ENCODE measurements at regions of chr10 and their contacts with region 1.

Region 1: GRCh38 chr10:16777473-16778370 is 39.5 kb downstream of the RSU1 start:
- DNase-seq: peak; percentile 19
- ATAC-seq: no peak
- H3K4me3 ChIP-seq: no peak overlapping the region
- H3K27ac ChIP-seq: no peak overlapping the region
- H3K4me1 ChIP-seq: no peaks in the 10 kb centered on the region
- H3K27me3 ChIP-seq: no peaks in the 10 kb centered on the region
- CTCF ChIP-seq: peak; percentile 41 to 81 (median 58); a peak in 5 of 6 replicates
- POLR2A ChIP-seq: no peak
- RAD21 ChIP-seq: peak; percentile 69

Region 2: DNA sequence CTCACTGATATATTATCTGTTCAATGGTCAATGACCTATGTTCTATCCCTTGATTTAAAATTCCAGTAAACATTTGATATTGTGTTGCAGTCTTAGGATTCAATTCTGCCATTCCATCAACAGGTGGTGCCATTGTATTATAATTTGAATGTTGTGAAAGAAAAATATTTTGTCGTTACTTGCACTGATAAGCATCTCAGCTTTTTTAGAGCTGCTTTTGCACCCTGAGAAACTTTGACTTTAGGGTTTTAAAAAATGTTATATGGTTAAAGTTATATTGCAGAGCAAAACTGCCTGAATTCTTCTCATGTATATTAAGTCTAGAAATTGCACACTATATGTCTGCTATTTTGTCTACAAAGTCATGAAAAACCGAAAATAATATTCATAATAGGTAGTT is 898.7 kb before region 1 on chr10:
- CTCF ChIA-PET with region 1: interaction called, 3 read pairs
- POLR2A ChIA-PET with region 1: no interaction called
- RAD21 ChIA-PET with region 1: no interaction called
- intact Hi-C with region 1: loop called (anchors 2 kb)
- DNase-seq: no peak
- ATAC-seq: peak; percentile 53
- H3K4me3 ChIP-seq: no peak overlapping the region
- H3K27ac ChIP-seq: no peak overlapping the region
- H3K4me1 ChIP-seq: no peaks in the 10 kb centered on the region
- H3K27me3 ChIP-seq: peaks cover 33% of the 10 kb centered on the region
- CTCF ChIP-seq: peak; percentile 48 to 82 (median 59); a peak in 5 of 6 replicates
- POLR2A ChIP-seq: no peak
- RAD21 ChIP-seq: peak; percentile 69

Region 3: DNA sequence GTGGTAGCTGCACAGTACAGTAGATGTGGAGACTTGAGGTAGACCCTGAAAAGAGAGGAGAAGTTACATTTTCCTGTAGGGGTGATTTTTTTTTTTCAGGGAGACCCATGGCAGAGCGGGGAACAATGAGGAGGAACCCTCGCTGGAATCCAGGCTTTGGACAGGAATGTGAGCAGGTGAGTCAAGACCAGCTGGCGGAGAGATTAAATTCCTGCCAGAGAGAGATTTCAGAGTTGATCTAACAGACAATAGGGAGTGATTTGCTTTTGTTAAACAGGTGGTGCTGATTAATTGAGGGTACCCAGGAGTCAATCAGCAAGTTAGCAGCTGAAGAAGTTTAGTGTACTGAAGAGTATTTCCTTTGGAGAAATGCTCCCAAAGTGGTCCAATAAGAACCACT is 875.8 kb before region 1 on chr10:
- CTCF ChIA-PET with region 1: interaction called, 10 read pairs
- POLR2A ChIA-PET with region 1: no interaction called
- RAD21 ChIA-PET with region 1: no interaction called
- intact Hi-C with region 1: loop called (anchors 2 kb)
- DNase-seq: no peak
- ATAC-seq: no peak
- H3K4me3 ChIP-seq: no peak overlapping the region
- H3K27ac ChIP-seq: no peak overlapping the region
- H3K4me1 ChIP-seq: no peaks in the 10 kb centered on the region
- H3K27me3 ChIP-seq: peaks cover 9% of the 10 kb centered on the region; the same call in 1 of the 2 replicates
- CTCF ChIP-seq: no peak
- POLR2A ChIP-seq: no peak
- RAD21 ChIP-seq: no peak

Region 4: GRCh38 chr10:16049050-16049449 is 728.7 kb before region 1 on chr10:
- CTCF ChIA-PET with region 1: no interaction called
- POLR2A ChIA-PET with region 1: no interaction called
- RAD21 ChIA-PET with region 1: no interaction called
- intact Hi-C with region 1: loop called (anchors 5 kb)
- DNase-seq: no peak
- ATAC-seq: no peak
- H3K4me3 ChIP-seq: no peak overlapping the region
- H3K27ac ChIP-seq: no peak overlapping the region
- H3K4me1 ChIP-seq: no peaks in the 10 kb centered on the region
- H3K27me3 ChIP-seq: peaks cover 7% of the 10 kb centered on the region; the same call in 1 of the 2 replicates
- CTCF ChIP-seq: peak; percentile 24 to 44 (median 33); a peak in 5 of 6 replicates
- POLR2A ChIP-seq: no peak
- RAD21 ChIP-seq: peak; percentile 49; the same call in 1 of the 2 replicates

Region 5: DNA sequence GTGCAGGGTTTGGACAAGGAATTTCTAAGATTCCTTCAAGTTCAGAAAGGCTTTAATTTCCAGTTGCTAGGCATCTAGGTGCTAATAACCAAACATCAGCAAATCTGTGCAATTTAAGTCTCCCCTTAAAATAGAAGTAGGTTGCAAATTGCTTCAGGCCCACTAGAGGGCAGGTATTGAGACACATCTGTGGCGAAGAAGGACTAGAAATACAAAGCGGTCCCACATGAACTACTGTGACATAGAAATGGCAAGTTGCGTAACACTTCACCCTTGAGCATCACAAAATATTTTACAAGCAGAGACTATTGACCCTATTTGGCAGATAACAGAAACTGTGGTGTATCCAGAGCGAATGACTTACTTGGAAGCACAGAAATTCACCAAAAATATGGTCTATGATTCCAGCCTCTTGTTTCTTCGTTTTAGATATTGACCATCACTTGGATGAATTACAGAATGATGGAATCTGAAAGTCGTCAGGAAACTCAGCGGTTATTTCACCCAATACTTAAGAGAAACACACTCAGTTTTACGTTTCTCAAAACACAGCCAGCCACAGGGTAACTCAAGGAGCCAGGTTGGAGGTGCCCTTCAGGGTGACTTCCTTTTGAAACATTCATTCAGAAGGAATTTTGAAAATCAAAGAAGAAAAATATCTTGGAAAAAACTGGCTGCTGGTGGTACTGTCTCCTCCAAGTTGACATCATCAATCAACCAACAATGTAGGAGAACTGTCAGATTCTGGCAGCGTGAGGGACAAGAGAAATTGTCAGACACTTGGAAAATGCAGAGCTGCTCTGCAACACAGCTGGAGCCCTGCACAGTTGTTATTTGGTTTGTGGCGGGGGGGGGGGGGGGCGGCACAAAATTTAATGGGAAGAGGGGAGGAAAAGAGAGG is 661.1 kb before region 1 on chr10:
- CTCF ChIA-PET with region 1: no interaction called
- POLR2A ChIA-PET with region 1: no interaction called
- RAD21 ChIA-PET with region 1: no interaction called
- intact Hi-C with region 1: loop called (anchors 2 kb)
- DNase-seq: peak; percentile 4
- ATAC-seq: peak; percentile 72
- H3K4me3 ChIP-seq: no peak overlapping the region
- H3K27ac ChIP-seq: no peak overlapping the region
- H3K4me1 ChIP-seq: no peaks in the 10 kb centered on the region
- H3K27me3 ChIP-seq: peaks cover 18% of the 10 kb centered on the region; the same call in 1 of the 2 replicates
- CTCF ChIP-seq: peak; percentile 22 to 66 (median 62); a peak in 5 of 6 replicates
- POLR2A ChIP-seq: no peak
- RAD21 ChIP-seq: peak; percentile 44

Region 6: DNA sequence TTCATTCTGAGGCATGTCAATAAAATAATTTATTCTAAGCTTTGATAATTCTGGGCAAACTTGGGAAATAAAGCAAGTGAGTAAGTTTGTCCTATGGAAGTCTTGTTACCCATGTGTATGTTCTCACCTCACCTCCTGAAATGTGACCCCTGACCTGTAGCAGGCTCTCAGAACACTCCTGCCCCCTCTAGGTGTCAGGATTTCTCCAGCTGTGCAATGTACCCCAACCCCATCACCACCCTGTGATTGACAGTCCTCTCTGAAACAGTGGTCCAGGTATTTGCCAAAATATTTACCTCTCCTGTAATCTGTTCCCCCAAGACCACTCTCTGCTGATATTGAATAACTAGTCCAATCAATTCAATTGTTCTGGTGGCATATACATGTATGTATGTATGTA is 463.5 kb before region 1 on chr10:
- CTCF ChIA-PET with region 1: no interaction called
- POLR2A ChIA-PET with region 1: no interaction called
- RAD21 ChIA-PET with region 1: no interaction called
- intact Hi-C with region 1: loop called (anchors 10 kb)
- DNase-seq: peak; percentile 2
- ATAC-seq: peak; percentile 61; the same call in 1 of the 2 replicates
- H3K4me3 ChIP-seq: no peak overlapping the region
- H3K27ac ChIP-seq: no peak overlapping the region
- H3K4me1 ChIP-seq: no peaks in the 10 kb centered on the region
- H3K27me3 ChIP-seq: peaks cover 6% of the 10 kb centered on the region
- CTCF ChIP-seq: peak; percentile 8 to 34 (median 26); a peak in 3 of 6 replicates
- POLR2A ChIP-seq: no peak
- RAD21 ChIP-seq: peak; percentile 55

Region 7: GRCh38 chr10:16466001-16466400 is 311.7 kb before region 1 on chr10:
- CTCF ChIA-PET with region 1: no interaction called
- POLR2A ChIA-PET with region 1: no interaction called
- RAD21 ChIA-PET with region 1: no interaction called
- intact Hi-C with region 1: no loop called
- DNase-seq: no peak
- ATAC-seq: no peak
- H3K4me3 ChIP-seq: no peak overlapping the region
- H3K27ac ChIP-seq: no peak overlapping the region
- H3K4me1 ChIP-seq: peaks cover 0 to 7% of the 10 kb centered on the region in 2 experiments; a peak in 1 of 4 replicates
- H3K27me3 ChIP-seq: no peaks in the 10 kb centered on the region
- CTCF ChIP-seq: no peak
- POLR2A ChIP-seq: no peak
- RAD21 ChIP-seq: no peak